ENCODE measurements at regions of chr5 and their contacts with region 1.

Region 1: DNA sequence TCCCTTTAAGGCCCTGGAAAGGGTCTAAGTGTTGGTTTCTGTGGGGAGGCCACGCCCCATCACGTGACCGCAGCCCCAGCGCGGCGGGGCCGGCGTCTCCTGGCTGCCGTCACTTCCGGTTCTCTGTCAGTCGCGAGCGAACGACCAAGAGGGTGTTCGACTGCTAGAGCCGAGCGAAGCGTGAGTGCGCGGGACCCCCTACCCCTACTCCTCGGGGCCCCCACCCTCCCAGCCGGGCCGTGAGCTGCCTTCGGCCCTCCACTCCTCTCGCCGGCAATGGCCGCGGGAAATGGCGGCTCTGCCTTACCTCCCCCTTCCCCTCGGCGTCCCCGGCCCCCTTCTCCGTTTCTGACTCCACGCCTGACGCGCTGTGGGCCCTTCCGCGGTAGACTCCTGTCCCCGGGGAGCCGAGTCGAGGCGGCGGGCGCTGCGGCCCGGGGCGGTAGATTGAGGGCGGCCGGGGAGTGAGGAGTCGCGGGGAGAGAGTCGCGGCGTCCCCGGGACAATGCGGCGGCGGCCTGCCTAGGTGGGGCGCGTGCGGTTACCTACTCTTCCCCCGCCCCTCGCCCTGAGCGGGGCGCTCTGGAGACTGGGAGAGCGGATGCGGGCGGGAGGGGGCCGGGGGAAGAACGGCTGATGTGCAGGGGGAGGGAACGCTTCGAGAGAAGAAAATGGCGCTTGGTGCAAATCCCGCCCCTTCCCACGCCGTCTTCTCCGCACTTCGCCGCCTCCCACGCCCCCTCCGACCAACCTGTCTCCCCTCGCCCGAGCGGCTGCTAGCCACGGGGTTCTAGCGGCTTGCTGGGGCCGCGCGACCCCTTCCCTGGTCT is at the start of gene SUB1:
- DNase-seq: peak; percentile 96 to 99 (median 98)
- ATAC-seq: peak; percentile 98
- H3K4me3 ChIP-seq: peak within 1 kb of the TSS; percentile 96
- H3K27ac ChIP-seq: peak within 1 kb of the TSS; percentile 97
- H3K4me1 ChIP-seq: peaks cover 3 to 23% of the 10 kb centered on the region in 2 experiments; a peak in 3 of 5 replicates
- H3K27me3 ChIP-seq: no peaks in the 10 kb centered on the region
- CTCF ChIP-seq: peak in 2 of 3 experiments; percentile 26 to 31; a peak in 3 of 6 replicates
- EP300 ChIP-seq: no peak
- POLR2A ChIP-seq: peak; percentile 97
- RAD21 ChIP-seq: no peak
- polyA plus RNA-seq, gene SUB1: 887 to 932 TPM

Region 2: DNA sequence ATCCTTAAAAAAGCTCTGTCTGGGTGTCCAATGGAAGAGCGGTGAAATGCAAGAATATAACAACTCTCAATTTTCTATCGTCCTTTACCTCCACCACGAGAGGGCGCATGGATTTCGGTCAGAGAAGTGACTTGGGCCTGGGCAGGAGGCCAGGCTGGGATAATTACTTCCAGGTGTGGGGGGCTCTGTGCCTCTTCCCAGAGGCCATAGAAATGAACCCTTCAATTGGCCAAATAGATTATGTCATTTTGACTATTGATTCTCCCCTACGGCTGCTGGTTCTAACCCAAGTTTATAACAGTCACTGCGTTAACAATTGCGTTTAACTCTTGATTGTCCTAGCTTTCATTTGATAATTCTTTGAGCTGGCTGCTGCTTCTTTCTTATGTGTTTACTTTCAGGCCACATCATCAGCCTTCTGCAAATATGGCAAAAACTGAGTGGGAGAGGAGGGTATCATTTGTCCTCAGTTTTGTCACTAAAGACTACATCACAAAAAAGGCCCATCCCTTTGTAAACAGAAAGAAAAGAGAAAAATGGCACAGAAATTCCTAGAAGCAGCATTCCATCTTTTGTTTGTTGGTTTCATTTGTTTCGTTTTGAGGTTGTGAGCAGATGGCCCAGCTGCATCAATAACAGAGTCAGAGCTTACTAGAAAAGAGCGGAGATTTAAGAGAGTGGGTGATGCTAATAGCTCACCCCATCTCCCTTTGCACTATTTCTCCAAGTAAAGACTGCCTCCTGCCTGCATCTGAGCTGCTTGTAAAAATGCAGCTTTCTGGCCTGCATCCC is 95.7 kb before region 1 on chr5:
- CTCF ChIA-PET with region 1: interaction called, 24 read pairs
- POLR2A ChIA-PET with region 1: interaction called, 12 read pairs
- in situ Hi-C with region 1: loop called (anchors 10 kb)
- intact Hi-C with region 1: loop called (anchors 1 kb)
- DNase-seq: peak; percentile 69 to 84 (median 76)
- ATAC-seq: peak; percentile 90
- H3K4me3 ChIP-seq: no peak overlapping the region
- H3K27ac ChIP-seq: no peak overlapping the region
- H3K4me1 ChIP-seq: no peaks in the 10 kb centered on the region
- H3K27me3 ChIP-seq: peaks cover 6 to 26% of the 10 kb centered on the region in 2 experiments
- CTCF ChIP-seq: peak; percentile 82 to 87 (median 83)
- EP300 ChIP-seq: no peak
- POLR2A ChIP-seq: no peak
- RAD21 ChIP-seq: peak; percentile 88 to 91

Region 3: GRCh38 chr5:32531885-32532520 is 53.7 kb before region 1 on chr5:
- CTCF ChIA-PET with region 1: no interaction called
- POLR2A ChIA-PET with region 1: no interaction called
- in situ Hi-C with region 1: no loop called
- intact Hi-C with region 1: loop called (anchors 5 kb)
- DNase-seq: no peak
- ATAC-seq: peak; percentile 60
- H3K4me3 ChIP-seq: no peak overlapping the region
- H3K27ac ChIP-seq: no peak overlapping the region
- H3K4me1 ChIP-seq: 0 out of 5 replicates have a peak, but pooled peaks cover 0 to 2% of the 10 kb centered on the region in 2 experiments
- H3K27me3 ChIP-seq: peaks cover 8 to 18% of the 10 kb centered on the region in 2 experiments; a peak in 4 of 5 replicates
- CTCF ChIP-seq: no peak
- EP300 ChIP-seq: no peak
- POLR2A ChIP-seq: no peak
- RAD21 ChIP-seq: no peak

Region 4: DNA sequence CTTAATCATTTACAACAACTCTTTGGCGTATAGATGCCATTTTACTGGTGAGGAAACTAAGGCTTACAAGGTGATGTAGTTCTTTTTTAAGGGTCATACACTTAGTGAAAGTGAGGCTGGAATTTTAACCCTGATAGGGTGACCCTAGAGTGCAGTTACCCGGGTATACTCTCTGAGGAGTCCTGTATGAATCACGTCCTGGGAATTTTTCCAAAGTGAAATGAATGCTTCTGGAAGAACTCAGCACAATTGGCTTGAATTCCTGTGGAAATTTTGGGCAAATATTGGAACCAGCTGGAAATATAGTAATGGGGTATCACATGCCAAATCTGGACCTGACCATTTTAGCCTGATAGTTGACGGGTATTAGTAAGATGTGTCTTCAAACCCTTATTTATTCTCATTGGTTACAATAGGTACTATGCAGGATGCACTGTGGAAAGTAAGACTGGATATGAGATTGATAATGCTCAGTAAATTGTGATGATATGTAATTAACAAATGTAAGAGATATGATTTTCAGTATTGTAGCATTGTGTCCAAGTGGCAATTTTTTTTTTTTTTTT is 14.5 kb after region 1 on chr5:
- CTCF ChIA-PET with region 1: no interaction called
- POLR2A ChIA-PET with region 1: interaction called, 10 read pairs
- in situ Hi-C with region 1: no loop called
- intact Hi-C with region 1: no loop called
- DNase-seq: no peak
- ATAC-seq: no peak
- H3K4me3 ChIP-seq: no peak overlapping the region
- H3K27ac ChIP-seq: no peak overlapping the region
- H3K4me1 ChIP-seq: no peaks in the 10 kb centered on the region
- H3K27me3 ChIP-seq: no peaks in the 10 kb centered on the region
- CTCF ChIP-seq: no peak
- EP300 ChIP-seq: no peak
- POLR2A ChIP-seq: no peak
- RAD21 ChIP-seq: no peak